ENCODE measurements at regions of chr13 and their contacts with region 1.

Region 1: DNA sequence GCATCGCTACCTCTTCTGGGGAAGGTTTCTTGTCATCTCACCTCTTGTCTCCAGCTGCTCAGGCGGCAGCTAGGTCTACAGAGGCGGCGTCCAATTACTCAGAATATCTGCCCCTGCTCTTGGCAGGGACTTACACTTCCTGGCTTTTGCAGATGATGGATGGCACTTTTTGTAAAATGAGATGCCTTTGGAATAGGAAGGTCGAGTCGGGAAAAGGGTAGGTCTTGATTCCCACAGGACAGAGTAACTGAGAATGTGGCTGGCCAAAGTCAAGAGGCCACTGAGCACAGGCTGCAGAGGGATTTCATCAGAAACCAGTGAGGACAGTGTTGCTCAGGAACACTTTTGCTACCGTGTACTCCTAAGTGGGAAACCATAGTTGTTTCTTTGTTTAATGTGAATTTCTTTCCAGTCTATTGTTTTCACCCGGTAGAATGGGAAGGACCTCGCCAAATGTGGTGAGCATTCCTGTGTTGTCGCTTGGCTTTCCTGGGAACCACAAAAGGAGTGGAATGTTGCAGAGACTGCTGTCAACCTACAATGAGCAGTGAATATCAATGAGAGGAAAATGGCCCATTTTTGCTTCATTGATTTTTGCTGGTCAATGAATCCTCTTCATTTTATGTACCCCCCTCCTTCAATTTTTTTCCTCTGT is 383.7 kb downstream of the HS6ST3 start:
- DNase-seq: no peak
- ATAC-seq: no peak
- H3K4me3 ChIP-seq: no peak overlapping the region
- H3K4me3 Mint-ChIP-seq: no peak overlapping the region
- H3K27ac ChIP-seq: no peak overlapping the region
- H3K27ac Mint-ChIP-seq: no peak overlapping the region
- H3K4me1 ChIP-seq: no peaks in the 10 kb centered on the region
- H3K4me1 Mint-ChIP-seq: no peaks in the 10 kb centered on the region
- H3K27me3 ChIP-seq: no peaks in the 10 kb centered on the region
- H3K27me3 Mint-ChIP-seq: no peaks in the 10 kb centered on the region
- CTCF ChIP-seq: no peak

Region 2: DNA sequence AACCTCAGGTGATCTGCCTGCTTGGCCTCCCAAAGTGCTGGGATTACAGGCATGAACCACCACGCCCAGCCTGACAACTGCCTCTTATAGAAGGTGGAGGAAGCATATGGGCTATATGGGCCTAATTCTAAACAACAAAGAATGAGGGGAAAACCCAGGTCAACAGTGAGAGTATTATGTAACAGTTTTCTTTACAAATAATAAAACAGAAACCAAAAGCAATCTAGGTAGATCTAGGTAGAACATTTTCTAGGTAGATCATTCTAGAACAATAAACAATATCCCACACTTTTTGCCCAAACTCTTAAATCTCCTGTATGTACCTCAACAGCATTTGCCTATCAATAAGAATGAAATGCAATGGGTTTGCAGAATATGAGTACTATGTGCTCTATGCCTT is 1439.8 kb before region 1 on chr13:
- CTCF ChIA-PET with region 1: no interaction called
- POLR2A ChIA-PET with region 1: no interaction called
- intact Hi-C with region 1: no loop called
- DNase-seq: no peak
- ATAC-seq: no peak
- H3K4me3 ChIP-seq: no peak overlapping the region
- H3K4me3 Mint-ChIP-seq: no peak overlapping the region
- H3K27ac ChIP-seq: no peak overlapping the region
- H3K27ac Mint-ChIP-seq: no peak overlapping the region
- H3K4me1 ChIP-seq: no peaks in the 10 kb centered on the region
- H3K4me1 Mint-ChIP-seq: peaks cover 2% of the 10 kb centered on the region
- H3K27me3 ChIP-seq: no peaks in the 10 kb centered on the region
- H3K27me3 Mint-ChIP-seq: no peaks in the 10 kb centered on the region
- CTCF ChIP-seq: no peak

Region 3: DNA sequence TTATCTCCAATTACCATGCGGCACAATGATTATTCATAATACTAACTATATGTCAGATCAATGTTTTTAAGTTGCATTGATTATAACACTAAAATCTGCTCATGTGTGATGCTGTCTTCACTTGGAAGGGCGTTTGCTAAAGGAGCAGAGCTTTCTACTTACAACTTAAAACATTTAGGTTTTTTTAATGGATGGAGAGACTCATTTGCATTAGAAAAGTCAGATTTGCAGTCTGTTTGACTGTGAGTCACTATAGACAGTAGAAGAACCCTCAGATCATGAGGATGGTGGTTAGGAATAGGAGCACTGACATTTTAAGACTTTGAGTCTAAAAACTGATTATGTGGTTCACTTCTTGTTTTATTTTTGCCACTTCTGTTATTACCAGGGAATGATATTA is 19.2 kb before region 1 on chr13:
- CTCF ChIA-PET with region 1: no interaction called
- POLR2A ChIA-PET with region 1: no interaction called
- intact Hi-C with region 1: loop called in 1 of 2 experiments (anchors 2 kb)
- DNase-seq: no peak
- ATAC-seq: no peak
- H3K4me3 ChIP-seq: no peak overlapping the region
- H3K4me3 Mint-ChIP-seq: no peak overlapping the region
- H3K27ac ChIP-seq: no peak overlapping the region
- H3K27ac Mint-ChIP-seq: no peak overlapping the region
- H3K4me1 ChIP-seq: no peaks in the 10 kb centered on the region
- H3K4me1 Mint-ChIP-seq: no peaks in the 10 kb centered on the region
- H3K27me3 ChIP-seq: no peaks in the 10 kb centered on the region
- H3K27me3 Mint-ChIP-seq: no peaks in the 10 kb centered on the region
- CTCF ChIP-seq: no peak